HepG2 (cell line): ENCODE measurements at regions of chr10 and their contacts with region 1.

Region 1: GRCh38 chr10:122298598-122299301 is 27.7 kb downstream of the BTBD16 start:
- DNase-seq: peak; percentile 74
- ATAC-seq: peak; percentile 91
- H3K4me3 ChIP-seq: peak overlapping the region; percentile 29 to 64 (median 31); a peak in 5 of 6 replicates
- H3K27ac ChIP-seq: peak overlapping the region; percentile 32
- H3K4me1 ChIP-seq: peaks cover 69% of the 10 kb centered on the region
- H3K27me3 ChIP-seq: peaks cover 0 to 26% of the 10 kb centered on the region in 2 experiments; a peak in 2 of 5 replicates
- CTCF ChIP-seq: peak; percentile 96
- EP300 ChIP-seq: no peak
- POLR2A ChIP-seq: no peak
- RAD21 ChIP-seq: peak; percentile 97

Region 2: DNA sequence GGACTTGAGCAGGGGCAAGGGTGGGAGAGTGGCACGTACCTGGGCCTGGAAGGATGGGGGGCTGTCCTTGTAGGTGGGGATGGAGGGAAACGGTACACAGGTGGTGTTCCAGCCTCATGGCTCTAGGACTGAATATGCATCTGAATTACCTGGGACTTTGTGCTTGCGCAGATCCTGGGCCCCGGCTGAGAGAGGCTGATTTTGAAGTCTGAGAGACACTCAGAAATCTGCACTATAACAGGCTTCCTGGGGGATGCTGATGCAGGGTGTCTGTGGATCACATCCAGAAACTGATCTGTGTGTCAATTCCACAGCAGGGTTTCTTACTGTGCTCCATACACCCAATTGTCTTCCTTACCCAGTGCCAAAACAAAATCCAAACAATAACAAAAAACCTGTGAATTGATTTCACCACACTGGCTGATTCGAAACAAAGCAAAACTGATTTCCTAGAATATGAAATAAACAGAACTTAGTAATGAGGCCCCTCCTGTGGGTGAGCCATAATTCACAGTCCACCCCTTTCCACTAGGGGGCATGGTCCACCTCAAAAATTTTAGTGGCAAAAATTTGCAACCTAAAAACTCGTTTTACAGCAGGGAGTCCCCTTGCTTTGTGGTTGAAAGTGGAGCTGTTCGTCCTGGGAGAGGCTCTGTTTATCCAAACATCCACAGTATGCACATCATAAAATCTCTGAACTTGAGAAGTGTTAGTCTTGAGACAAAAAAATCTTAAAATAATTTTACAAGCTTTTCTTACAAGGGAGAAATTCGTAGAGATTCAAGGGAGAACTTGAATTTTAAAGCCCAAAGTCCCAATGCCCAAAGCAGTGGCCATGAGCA is 43.8 kb after region 1 on chr10:
- CTCF ChIA-PET with region 1: interaction called, 10 read pairs
- POLR2A ChIA-PET with region 1: interaction called, 21 read pairs
- in situ Hi-C with region 1: loop called (anchors 5 kb)
- intact Hi-C with region 1: loop called (anchors 1 kb)
- DNase-seq: peak; percentile 54
- ATAC-seq: peak; percentile 64
- H3K4me3 ChIP-seq: no peak overlapping the region
- H3K27ac ChIP-seq: no peak overlapping the region
- H3K4me1 ChIP-seq: peaks cover 44% of the 10 kb centered on the region
- H3K27me3 ChIP-seq: no peaks in the 10 kb centered on the region
- CTCF ChIP-seq: peak; percentile 71
- EP300 ChIP-seq: no peak
- POLR2A ChIP-seq: no peak
- RAD21 ChIP-seq: peak; percentile 81

Region 3: GRCh38 chr10:122374237-122374869 is 75.6 kb after region 1 on chr10 and contains the start of gene PLEKHA1:
- CTCF ChIA-PET with region 1: no interaction called
- POLR2A ChIA-PET with region 1: interaction called, 13 read pairs
- in situ Hi-C with region 1: no loop called
- intact Hi-C with region 1: loop called (anchors 2 kb)
- DNase-seq: peak; percentile 84
- ATAC-seq: peak; percentile 95
- H3K4me3 ChIP-seq: peak within 1 kb of the TSS; percentile 86 to 89 (median 87)
- H3K27ac ChIP-seq: peak within 1 kb of the TSS; percentile 82
- H3K4me1 ChIP-seq: peaks cover 61% of the 10 kb centered on the region
- H3K27me3 ChIP-seq: peaks cover 0 to 6% of the 10 kb centered on the region in 2 experiments; a peak in 1 of 5 replicates
- CTCF ChIP-seq: 0 out of 2 replicates have a peak, but pooled peaks have one; percentile 4
- EP300 ChIP-seq: no peak
- POLR2A ChIP-seq: peak in 1 of 2 experiments; percentile 70; a peak in 2 of 4 replicates
- RAD21 ChIP-seq: no peak
- total RNA-seq, gene PLEKHA1: 30.8 and 32.2 TPM in 2 replicates

Region 4: GRCh38 chr10:122391875-122392274 is 93.1 kb after region 1 on chr10:
- CTCF ChIA-PET with region 1: no interaction called
- POLR2A ChIA-PET with region 1: no interaction called
- in situ Hi-C with region 1: no loop called
- intact Hi-C with region 1: loop called (anchors 5 kb)
- DNase-seq: no peak
- ATAC-seq: no peak
- H3K4me3 ChIP-seq: no peak overlapping the region
- H3K27ac ChIP-seq: no peak overlapping the region
- H3K4me1 ChIP-seq: peaks cover 33% of the 10 kb centered on the region
- H3K27me3 ChIP-seq: no peaks in the 10 kb centered on the region
- CTCF ChIP-seq: no peak
- EP300 ChIP-seq: no peak
- POLR2A ChIP-seq: no peak
- RAD21 ChIP-seq: no peak

Region 5: DNA sequence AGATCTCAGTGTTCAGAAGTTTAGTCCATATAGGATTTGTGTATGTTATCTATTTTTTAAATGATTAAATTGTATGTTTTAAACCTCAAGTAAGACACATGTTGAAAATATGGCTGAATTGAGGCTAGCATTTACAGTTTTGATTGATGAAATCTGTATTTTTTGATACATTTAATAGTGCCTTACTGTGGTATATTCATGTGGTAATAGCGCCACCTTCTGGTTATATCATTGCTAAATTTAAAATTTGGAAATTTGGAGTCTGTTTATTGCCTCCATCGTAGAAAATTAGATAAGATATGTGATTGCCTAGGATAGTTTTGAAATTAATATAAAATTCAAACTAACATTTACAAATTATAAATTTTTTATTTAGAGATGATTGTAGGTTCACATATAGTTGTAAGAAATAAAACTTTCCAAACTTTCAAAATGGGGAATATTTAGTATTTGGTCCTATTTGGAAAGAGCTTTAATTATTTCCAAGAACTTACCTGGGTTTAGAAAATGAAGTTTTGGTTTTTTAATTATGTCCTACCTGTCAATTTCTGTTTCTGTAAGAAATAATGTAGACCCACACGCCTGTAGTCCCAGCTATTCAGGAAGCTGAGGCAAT is 136.6 kb after region 1 on chr10:
- CTCF ChIA-PET with region 1: interaction called, 48 read pairs
- POLR2A ChIA-PET with region 1: no interaction called
- in situ Hi-C with region 1: loop called (anchors 5 kb)
- intact Hi-C with region 1: loop called (anchors 1 kb)
- DNase-seq: peak; percentile 30
- ATAC-seq: no peak
- H3K4me3 ChIP-seq: no peak overlapping the region
- H3K27ac ChIP-seq: no peak overlapping the region
- H3K4me1 ChIP-seq: no peaks in the 10 kb centered on the region
- H3K27me3 ChIP-seq: no peaks in the 10 kb centered on the region
- CTCF ChIP-seq: peak; percentile 62
- EP300 ChIP-seq: no peak
- POLR2A ChIP-seq: no peak
- RAD21 ChIP-seq: 0 out of 2 replicates have a peak, but pooled peaks have one; percentile 56

Region 6: GRCh38 chr10:122565728-122566206 is 267.0 kb after region 1 on chr10:
- CTCF ChIA-PET with region 1: interaction called, 16 read pairs
- POLR2A ChIA-PET with region 1: interaction called, 3 read pairs
- in situ Hi-C with region 1: no loop called
- intact Hi-C with region 1: loop called (anchors 5 kb)
- DNase-seq: peak; percentile 56
- ATAC-seq: peak; percentile 56
- H3K4me3 ChIP-seq: peak overlapping the region in 1 of 3 experiments; percentile 45; a peak in 1 of 6 replicates
- H3K27ac ChIP-seq: no peak overlapping the region
- H3K4me1 ChIP-seq: no peaks in the 10 kb centered on the region
- H3K27me3 ChIP-seq: peaks cover 0 to 5% of the 10 kb centered on the region in 2 experiments; a peak in 3 of 5 replicates
- CTCF ChIP-seq: peak; percentile 88
- EP300 ChIP-seq: no peak
- POLR2A ChIP-seq: no peak
- RAD21 ChIP-seq: peak; percentile 78; the same call in 1 of the 2 replicates

Region 7: DNA sequence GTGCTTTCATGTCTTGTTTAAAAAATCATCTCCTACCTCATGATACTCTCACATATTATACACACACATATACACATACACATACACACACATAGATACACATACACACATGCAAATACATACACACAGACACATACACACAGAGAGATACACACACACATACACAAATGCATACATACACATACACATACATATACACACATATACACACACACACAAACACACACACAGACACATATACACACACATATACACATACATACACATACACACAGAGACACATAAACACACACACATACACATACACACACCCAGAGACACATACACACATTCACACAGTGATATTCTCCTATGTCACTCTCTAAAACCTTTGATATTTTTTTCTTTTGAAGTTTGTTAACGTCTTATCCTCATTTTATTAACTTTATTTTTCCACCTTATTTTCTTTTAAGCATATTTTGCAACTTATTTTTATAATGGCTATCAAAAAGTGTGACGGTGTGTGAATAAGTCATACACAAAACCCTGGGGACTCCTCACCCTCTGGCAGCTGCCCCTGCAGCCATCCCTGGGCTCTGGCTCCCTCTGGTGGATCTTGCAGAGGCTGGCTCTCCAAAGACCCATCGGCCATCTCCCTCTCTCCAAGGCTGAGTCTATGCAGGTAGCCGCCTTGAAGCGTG is 404.8 kb after region 1 on chr10:
- CTCF ChIA-PET with region 1: no interaction called
- POLR2A ChIA-PET with region 1: no interaction called
- in situ Hi-C with region 1: loop called (anchors 10 kb)
- intact Hi-C with region 1: no loop called
- DNase-seq: peak; percentile 41
- ATAC-seq: peak; percentile 98
- H3K4me3 ChIP-seq: no peak overlapping the region
- H3K27ac ChIP-seq: no peak overlapping the region
- H3K4me1 ChIP-seq: no peaks in the 10 kb centered on the region
- H3K27me3 ChIP-seq: peaks cover 2 to 10% of the 10 kb centered on the region in 2 experiments; a peak in 4 of 5 replicates
- CTCF ChIP-seq: peak; percentile 89
- EP300 ChIP-seq: no peak
- POLR2A ChIP-seq: no peak
- RAD21 ChIP-seq: peak; percentile 84